Activated CD4-positive, alpha-beta T cell treated with anti-CD3 and anti-CD28 coated beads, Interleukin-2, amount 10 ng/mL, durations not matched to agents 7 days and 5 days (primary cell): ENCODE measurements at regions of chr2 and their contacts with region 1.

Region 1: DNA sequence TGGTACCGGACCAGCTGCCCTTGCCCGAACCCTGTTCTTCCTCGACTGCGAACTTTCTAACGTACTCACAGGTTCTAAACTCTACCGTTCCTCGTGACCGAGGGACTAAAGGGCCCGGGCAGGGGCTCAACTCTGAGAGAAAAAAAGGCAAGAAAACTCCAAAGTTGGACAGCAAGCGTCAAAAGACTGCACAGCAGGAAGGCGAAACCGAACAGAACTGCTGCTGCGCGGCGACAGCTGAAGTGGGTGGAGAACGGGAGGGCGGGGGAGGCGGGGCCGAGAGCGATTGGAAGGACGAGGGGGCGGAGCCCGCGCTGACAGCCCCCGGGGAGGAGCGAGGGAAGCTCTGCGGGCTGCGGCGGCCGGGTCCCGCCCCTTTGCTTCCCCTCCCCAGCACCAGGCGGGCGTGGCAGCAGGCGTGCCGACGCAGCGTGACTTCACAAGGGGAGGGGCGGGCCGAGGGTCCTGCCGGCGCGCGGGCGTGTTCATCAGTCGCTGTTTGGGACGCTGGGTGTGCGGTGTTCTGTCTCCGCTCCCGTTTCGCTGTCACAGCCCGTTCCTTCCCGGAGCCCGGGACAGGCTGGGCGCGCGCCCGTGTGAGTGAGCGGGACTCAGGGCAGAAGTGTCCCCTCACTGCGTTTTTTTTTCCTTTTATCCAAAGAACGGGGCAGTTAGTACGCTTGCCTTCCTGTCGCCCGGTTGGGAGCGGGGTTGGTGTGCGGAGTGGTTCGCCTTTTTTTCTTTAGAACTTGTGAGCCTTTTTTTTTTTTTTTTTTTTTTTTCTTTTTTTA is at the start of gene NABP1:
- DNase-seq: peak; percentile 98
- H3K4me3 Mint-ChIP-seq: peak within 1 kb of the TSS; percentile 99
- H3K27ac Mint-ChIP-seq: peak within 1 kb of the TSS; percentile 100
- H3K4me1 Mint-ChIP-seq: peaks cover 59% of the 10 kb centered on the region
- H3K27me3 Mint-ChIP-seq: no peaks in the 10 kb centered on the region
- total RNA-seq, gene NABP1: 47.1 to 48.0 TPM

Region 2: GRCh38 chr2:191617575-191617974 is 60.3 kb before region 1 on chr2:
- CTCF ChIA-PET with region 1: interaction called, 7 read pairs
- POLR2A ChIA-PET with region 1: interaction called, 12 read pairs
- DNase-seq: peak; percentile 68
- H3K4me3 Mint-ChIP-seq: peak overlapping the region; percentile 0
- H3K27ac Mint-ChIP-seq: peak overlapping the region; percentile 83
- H3K4me1 Mint-ChIP-seq: peaks cover 44% of the 10 kb centered on the region
- H3K27me3 Mint-ChIP-seq: peaks cover 3% of the 10 kb centered on the region

Region 3: GRCh38 chr2:191625016-191625415 is 52.8 kb before region 1 on chr2:
- CTCF ChIA-PET with region 1: interaction called, 11 read pairs
- POLR2A ChIA-PET with region 1: no interaction called
- DNase-seq: peak; percentile 42
- H3K4me3 Mint-ChIP-seq: no peak overlapping the region
- H3K27ac Mint-ChIP-seq: peak overlapping the region; percentile 68
- H3K4me1 Mint-ChIP-seq: peaks cover 48% of the 10 kb centered on the region
- H3K27me3 Mint-ChIP-seq: peaks cover 1% of the 10 kb centered on the region

Region 4: GRCh38 chr2:191637182-191638078 is 40.4 kb before region 1 on chr2:
- CTCF ChIA-PET with region 1: interaction called, 6 read pairs
- POLR2A ChIA-PET with region 1: interaction called, 20 read pairs
- DNase-seq: peak; percentile 50
- H3K4me3 Mint-ChIP-seq: peak overlapping the region; percentile 46
- H3K27ac Mint-ChIP-seq: peak overlapping the region; percentile 94
- H3K4me1 Mint-ChIP-seq: peaks cover 61% of the 10 kb centered on the region
- H3K27me3 Mint-ChIP-seq: peaks cover 3% of the 10 kb centered on the region

Region 5: GRCh38 chr2:191660575-191661388 is 17.1 kb before region 1 on chr2:
- CTCF ChIA-PET with region 1: interaction called, 20 read pairs
- POLR2A ChIA-PET with region 1: no interaction called
- DNase-seq: no peak
- H3K4me3 Mint-ChIP-seq: no peak overlapping the region
- H3K27ac Mint-ChIP-seq: no peak overlapping the region
- H3K4me1 Mint-ChIP-seq: peaks cover 23% of the 10 kb centered on the region
- H3K27me3 Mint-ChIP-seq: no peaks in the 10 kb centered on the region

Region 6: GRCh38 chr2:191666732-191667131 is 11.1 kb before region 1 on chr2:
- CTCF ChIA-PET with region 1: interaction called, 20 read pairs
- POLR2A ChIA-PET with region 1: no interaction called
- DNase-seq: no peak
- H3K4me3 Mint-ChIP-seq: no peak overlapping the region
- H3K27ac Mint-ChIP-seq: no peak overlapping the region
- H3K4me1 Mint-ChIP-seq: peaks cover 22% of the 10 kb centered on the region
- H3K27me3 Mint-ChIP-seq: no peaks in the 10 kb centered on the region

Region 7: DNA sequence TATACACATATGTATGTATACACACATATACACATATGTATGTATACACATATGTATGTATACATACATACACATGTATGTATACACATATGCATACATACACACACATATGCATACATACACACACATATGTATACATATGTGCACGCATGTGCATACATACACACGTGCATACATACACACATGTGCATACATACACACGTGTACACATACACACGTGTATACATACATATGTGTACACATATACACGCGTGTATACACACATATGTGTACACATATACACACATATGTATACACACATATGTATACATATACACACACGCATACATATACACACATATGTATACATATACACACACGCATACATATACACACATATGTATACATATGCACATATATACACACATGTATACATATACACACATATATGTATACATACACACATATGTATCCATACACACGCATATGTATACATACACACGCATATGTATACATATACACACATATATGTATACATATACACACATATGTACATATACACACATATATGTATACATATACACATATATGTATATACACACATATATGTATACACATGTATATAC is 21.6 kb after region 1 on chr2:
- CTCF ChIA-PET with region 1: no interaction called
- POLR2A ChIA-PET with region 1: no interaction called
- DNase-seq: no peak
- H3K4me3 Mint-ChIP-seq: no peak overlapping the region
- H3K27ac Mint-ChIP-seq: no peak overlapping the region
- H3K4me1 Mint-ChIP-seq: no peaks in the 10 kb centered on the region
- H3K27me3 Mint-ChIP-seq: no peaks in the 10 kb centered on the region

Region 8: GRCh38 chr2:191933307-191934105 is 255.7 kb after region 1 on chr2:
- CTCF ChIA-PET with region 1: no interaction called
- POLR2A ChIA-PET with region 1: no interaction called
- DNase-seq: no peak
- H3K4me3 Mint-ChIP-seq: no peak overlapping the region
- H3K27ac Mint-ChIP-seq: no peak overlapping the region
- H3K4me1 Mint-ChIP-seq: no peaks in the 10 kb centered on the region
- H3K27me3 Mint-ChIP-seq: peaks cover 3% of the 10 kb centered on the region